Panc1 (cell line): ENCODE measurements at regions of chr11 and their contacts with region 1.

Region 1: DNA sequence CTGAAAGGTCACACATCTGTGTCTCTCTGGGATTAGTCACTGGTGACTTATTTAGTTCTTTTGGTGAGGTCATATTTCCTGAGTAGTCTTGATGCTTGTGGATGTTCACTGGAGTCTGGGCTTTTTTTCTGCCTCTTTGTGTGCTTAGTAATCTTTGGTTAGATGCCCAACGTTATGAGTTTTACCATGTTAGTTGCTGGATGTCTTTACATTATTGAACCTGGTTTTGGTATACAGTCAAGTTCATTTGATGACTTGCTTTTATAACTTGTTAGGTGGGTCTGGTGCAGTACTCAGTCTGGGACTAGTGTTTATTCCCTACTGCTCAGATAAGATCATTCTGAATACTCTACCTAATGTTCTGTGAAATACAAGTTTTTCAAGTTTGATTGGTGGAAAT is 26.2 kb upstream of the SLC37A2 start:
- DNase-seq: no peak
- ATAC-seq: no peak
- H3K4me3 ChIP-seq: no peak overlapping the region
- H3K27ac ChIP-seq: no peak overlapping the region
- H3K4me1 ChIP-seq: no peaks in the 10 kb centered on the region
- H3K27me3 ChIP-seq: no peaks in the 10 kb centered on the region
- CTCF ChIP-seq: no peak

Region 2: DNA sequence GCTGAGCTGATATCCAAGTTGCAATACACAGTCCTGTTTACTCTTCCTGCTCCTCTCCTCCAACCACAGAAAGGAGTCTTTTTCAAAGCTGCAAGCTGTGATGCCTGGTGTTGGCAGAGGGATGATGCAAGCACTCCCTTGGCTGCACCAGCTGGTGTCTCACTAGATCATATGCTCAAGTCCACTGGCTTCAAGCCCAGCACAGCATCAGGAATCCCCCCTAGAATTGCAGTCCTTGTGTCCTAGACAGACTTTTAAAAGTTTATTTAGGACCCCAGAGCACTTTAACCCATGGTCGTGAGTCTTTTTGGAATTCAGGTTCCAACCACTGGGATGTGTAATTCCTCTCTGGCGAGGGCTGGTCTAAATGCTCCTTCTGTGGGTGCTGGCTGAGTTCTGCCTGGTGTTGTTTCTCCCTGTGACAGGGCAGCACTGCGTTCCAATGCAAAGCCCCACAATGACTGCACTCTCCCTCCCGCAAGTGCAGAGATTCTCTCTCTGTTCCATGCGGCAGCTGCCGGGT is 119.8 kb before region 1 on chr11:
- CTCF ChIA-PET with region 1: no interaction called
- POLR2A ChIA-PET with region 1: no interaction called
- in situ Hi-C with region 1: no loop called
- intact Hi-C with region 1: loop called (anchors 10 kb)
- DNase-seq: no peak
- ATAC-seq: no peak
- H3K4me3 ChIP-seq: no peak overlapping the region
- H3K27ac ChIP-seq: no peak overlapping the region
- H3K4me1 ChIP-seq: no peaks in the 10 kb centered on the region
- H3K27me3 ChIP-seq: no peaks in the 10 kb centered on the region; the same call in 1 of the 2 replicates
- CTCF ChIP-seq: no peak

Region 3: GRCh38 chr11:125022551-125022950 is 14.4 kb before region 1 on chr11:
- CTCF ChIA-PET with region 1: no interaction called
- POLR2A ChIA-PET with region 1: no interaction called
- in situ Hi-C with region 1: no loop called
- intact Hi-C with region 1: no loop called
- DNase-seq: no peak
- ATAC-seq: no peak
- H3K4me3 ChIP-seq: no peak overlapping the region
- H3K27ac ChIP-seq: no peak overlapping the region
- H3K4me1 ChIP-seq: no peaks in the 10 kb centered on the region
- H3K27me3 ChIP-seq: no peaks in the 10 kb centered on the region
- CTCF ChIP-seq: no peak

Region 4: DNA sequence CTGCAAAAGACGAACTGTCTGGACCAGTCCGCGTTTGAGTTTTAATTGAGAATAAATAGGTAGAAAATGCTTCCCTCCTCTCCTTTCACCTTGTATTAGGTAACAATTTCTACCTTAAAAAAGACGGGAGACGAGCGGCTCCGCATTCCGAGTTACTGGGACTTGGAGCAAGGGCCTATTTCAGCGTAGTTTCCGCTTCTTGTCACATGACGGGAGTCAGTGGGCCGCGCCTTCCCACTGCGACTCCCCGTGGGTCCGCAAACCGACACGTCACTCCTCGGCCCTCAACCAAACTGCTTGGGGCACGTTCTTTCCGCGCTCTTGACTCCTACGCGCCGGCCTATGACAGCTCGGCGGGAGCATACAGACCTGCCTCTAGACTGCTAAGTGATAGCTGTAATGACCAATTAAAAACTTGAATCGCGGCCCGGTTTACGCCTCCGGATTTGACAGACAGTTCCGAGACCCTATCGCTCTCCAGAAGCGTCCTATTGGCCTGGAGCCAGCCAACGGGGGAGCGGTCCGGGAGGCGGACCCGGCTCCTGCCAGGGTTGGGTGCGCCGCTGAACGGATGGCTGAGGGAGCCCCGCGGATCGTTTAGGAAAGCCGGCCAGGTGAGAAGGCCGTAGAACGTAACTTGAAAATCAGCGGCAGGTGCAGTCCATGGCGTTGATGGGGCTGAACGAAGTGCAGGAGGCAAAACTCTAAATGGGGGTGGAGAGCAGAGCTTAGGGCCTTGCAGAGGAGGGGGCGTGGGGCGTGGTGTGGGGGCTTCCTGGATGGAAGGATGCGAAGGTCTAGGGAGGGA is 555.6 kb after region 1 on chr11 and contains the start of gene STT3A:
- CTCF ChIA-PET with region 1: no interaction called
- POLR2A ChIA-PET with region 1: no interaction called
- in situ Hi-C with region 1: no loop called
- intact Hi-C with region 1: no loop called
- DNase-seq: peak; percentile 99
- ATAC-seq: peak; percentile 98
- H3K4me3 ChIP-seq: peak within 1 kb of the TSS; percentile 86 to 99
- H3K27ac ChIP-seq: peak within 1 kb of the TSS; percentile 98
- H3K4me1 ChIP-seq: peaks cover 6% of the 10 kb centered on the region; the same call in 1 of the 2 replicates
- H3K27me3 ChIP-seq: no peaks in the 10 kb centered on the region
- CTCF ChIP-seq: no peak
- total RNA-seq, gene STT3A: 229 TPM